ENCODE measurements at regions of chr1 and their contacts with region 1.

Region 1: GRCh38 chr1:52404116-52404986 is at the starts of genes ORC1 and PRPF38A:
- DNase-seq: peak; percentile 99
- ATAC-seq: peak; percentile 92
- H3K4me3 Mint-ChIP-seq: peak within 1 kb of the TSS; percentile 100
- H3K27ac Mint-ChIP-seq: peak within 1 kb of the TSS; percentile 100
- H3K4me1 Mint-ChIP-seq: peaks cover 54% of the 10 kb centered on the region
- H3K27me3 Mint-ChIP-seq: no peaks in the 10 kb centered on the region
- total RNA-seq, gene ORC1: 38.3 to 38.4 TPM
- total RNA-seq, gene PRPF38A: 102 to 104 TPM

Region 2: DNA sequence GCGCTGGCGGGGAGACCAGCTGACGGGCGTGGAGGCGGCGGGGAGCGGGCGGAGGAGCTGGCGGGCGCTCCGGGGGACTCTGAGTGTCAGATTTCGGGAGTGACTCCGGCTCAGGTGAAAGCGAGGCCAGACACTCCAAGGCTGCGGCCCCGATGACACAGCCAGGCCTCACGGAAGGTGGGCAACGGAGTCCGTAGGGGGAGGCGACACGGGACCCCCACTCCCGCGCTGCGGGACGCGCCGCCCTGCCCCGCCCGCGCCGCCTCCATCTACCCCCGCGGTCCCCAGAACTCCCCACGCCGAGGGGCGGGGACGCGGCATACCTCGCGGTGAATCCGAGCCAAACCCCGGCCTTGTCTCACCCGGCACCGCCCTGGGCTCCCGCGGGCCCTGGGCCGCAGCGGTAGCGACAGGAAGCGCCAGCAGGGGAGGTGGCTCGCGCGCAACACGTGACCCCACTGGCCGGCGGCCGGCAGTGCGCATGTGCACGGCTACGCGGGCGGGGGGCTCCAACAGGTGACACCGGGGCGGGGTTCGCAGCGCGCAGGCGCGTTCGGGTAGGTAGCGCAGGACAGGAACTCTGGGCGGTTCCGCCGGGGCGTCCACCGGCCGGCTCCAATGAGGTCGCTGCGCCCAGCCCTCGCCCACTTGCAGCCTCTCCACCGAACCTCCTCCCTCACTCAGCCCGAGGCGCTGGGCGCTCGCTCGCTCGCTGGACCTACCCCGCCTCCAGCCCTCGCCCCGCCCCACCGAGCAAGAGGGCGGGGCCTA is 38.4 kb before region 1 on chr1 and contains the start of gene CC2D1B:
- CTCF ChIA-PET with region 1: interaction called, 5 read pairs
- POLR2A ChIA-PET with region 1: interaction called, 21 read pairs
- DNase-seq: peak; percentile 99
- ATAC-seq: peak; percentile 98
- H3K4me3 Mint-ChIP-seq: peak within 1 kb of the TSS; percentile 90
- H3K27ac Mint-ChIP-seq: peak within 1 kb of the TSS; percentile 98
- H3K4me1 Mint-ChIP-seq: peaks cover 40% of the 10 kb centered on the region
- H3K27me3 Mint-ChIP-seq: no peaks in the 10 kb centered on the region
- total RNA-seq, gene CC2D1B: 46.7 to 53.3 TPM

Region 3: DNA sequence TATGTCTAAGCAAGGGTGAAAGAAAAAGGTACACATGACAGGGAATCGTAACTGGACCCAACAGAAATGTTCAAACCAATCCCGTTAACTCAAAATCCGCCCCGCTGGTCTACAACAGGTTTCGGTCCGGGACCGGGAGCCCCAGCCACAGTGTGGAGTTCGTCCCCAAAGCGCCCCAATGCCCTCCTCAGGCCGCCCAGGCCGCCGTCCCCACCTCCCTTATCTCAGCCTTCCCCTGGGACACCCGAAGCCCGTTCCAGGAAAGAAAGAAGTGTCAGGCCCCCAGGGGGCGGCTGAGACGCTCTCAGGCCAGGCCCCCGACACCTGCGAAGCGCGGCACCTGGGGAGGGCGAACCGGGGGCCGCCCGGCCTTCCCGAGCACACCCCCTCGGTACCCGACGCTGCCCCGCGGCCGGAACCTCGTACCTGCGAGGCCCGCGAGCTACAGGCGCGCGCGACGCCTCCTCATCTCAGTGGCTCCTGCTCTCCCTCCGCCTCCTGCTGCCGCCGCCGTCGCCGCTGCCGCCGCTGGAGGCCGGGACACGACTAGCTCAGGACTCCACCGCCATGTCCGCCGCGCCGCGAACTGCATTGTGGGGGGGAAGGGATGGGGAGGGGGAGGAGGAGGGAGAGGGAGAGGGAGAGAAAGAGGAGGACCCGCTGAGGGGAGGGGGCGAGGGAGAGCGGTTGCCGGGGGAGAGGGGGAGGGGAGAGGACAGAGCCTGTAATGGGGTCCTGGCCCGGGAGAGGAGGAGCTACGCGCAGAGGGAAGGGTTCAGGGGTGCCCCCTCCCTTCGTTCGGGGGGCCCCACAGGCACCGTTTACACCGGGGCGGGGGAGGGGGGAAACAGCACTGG is 148.4 kb after region 1 on chr1 and contains the start of gene TUT4:
- CTCF ChIA-PET with region 1: interaction called, 5 read pairs
- POLR2A ChIA-PET with region 1: interaction called, 23 read pairs
- DNase-seq: peak; percentile 82
- ATAC-seq: peak; percentile 68
- H3K4me3 Mint-ChIP-seq: peak within 1 kb of the TSS; percentile 65
- H3K27ac Mint-ChIP-seq: peak within 1 kb of the TSS; percentile 61
- H3K4me1 Mint-ChIP-seq: peaks cover 23% of the 10 kb centered on the region
- H3K27me3 Mint-ChIP-seq: peaks cover 10% of the 10 kb centered on the region
- total RNA-seq, gene TUT4: 58.5 to 65.9 TPM

Region 4: GRCh38 chr1:52659356-52659755 is 255.0 kb after region 1 on chr1:
- CTCF ChIA-PET with region 1: interaction called, 18 read pairs
- POLR2A ChIA-PET with region 1: interaction called, 10 read pairs
- DNase-seq: peak; percentile 35
- ATAC-seq: peak; percentile 51
- H3K4me3 Mint-ChIP-seq: no peak overlapping the region
- H3K27ac Mint-ChIP-seq: peak overlapping the region; percentile 70
- H3K4me1 Mint-ChIP-seq: peaks cover 14% of the 10 kb centered on the region
- H3K27me3 Mint-ChIP-seq: no peaks in the 10 kb centered on the region

Region 5: GRCh38 chr1:52683367-52683940 is 279.1 kb after region 1 on chr1:
- CTCF ChIA-PET with region 1: interaction called, 34 read pairs
- POLR2A ChIA-PET with region 1: interaction called, 17 read pairs
- DNase-seq: no peak
- ATAC-seq: no peak
- H3K4me3 Mint-ChIP-seq: no peak overlapping the region
- H3K27ac Mint-ChIP-seq: peak overlapping the region; percentile 16
- H3K4me1 Mint-ChIP-seq: peaks cover 11% of the 10 kb centered on the region
- H3K27me3 Mint-ChIP-seq: no peaks in the 10 kb centered on the region

Measured in activated CD8-positive, alpha-beta T cell treated with anti-CD3 and anti-CD28 coated beads, Interleukin-2, amount 10 ng/mL, durations not matched to agents 7 days and 5 days (primary cell).